ENCODE measurements at regions of chr3 and their contacts with region 1.

Region 1: DNA sequence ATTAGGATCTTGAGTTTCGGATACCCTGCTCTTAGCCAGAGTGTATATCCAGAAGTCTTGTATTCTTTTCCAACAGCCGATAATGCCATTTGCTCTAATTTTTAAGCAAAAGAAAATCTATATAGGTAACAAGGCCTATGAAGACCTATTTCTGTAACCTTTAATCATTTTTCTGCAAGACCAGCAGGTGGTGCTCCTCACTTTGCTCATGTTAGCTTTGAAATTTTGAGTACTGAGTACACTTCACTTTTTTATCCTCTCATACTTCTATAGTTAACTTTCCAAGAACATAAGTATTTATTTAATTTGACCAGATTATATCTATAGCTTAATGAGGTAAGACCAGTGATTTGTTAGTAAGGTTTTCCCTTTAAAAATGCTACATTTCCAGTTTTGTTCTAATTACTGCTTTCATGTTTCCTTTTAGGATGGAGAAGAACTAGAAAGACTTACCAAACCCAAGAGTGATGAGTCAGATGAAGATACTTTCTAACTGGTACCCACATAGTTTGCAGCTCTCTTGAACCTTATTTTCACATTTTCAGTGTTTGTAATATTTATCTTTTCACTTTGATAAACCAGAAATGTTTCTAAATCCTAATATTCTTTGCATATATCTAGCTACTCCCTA is 20.5 kb downstream of the SLC35A5 start:
- DNase-seq: no peak
- ATAC-seq: no peak
- H3K4me3 ChIP-seq: no peak overlapping the region
- H3K27ac ChIP-seq: no peak overlapping the region
- H3K4me1 ChIP-seq: no peaks in the 10 kb centered on the region
- H3K27me3 ChIP-seq: no peaks in the 10 kb centered on the region

Region 2: GRCh38 chr3:112390783-112391641 is 191.3 kb before region 1 on chr3:
- intact Hi-C with region 1: no loop called
- DNase-seq: no peak
- ATAC-seq: peak; percentile 78 to 82
- H3K4me3 ChIP-seq: no peak overlapping the region
- H3K27ac ChIP-seq: peak overlapping the region; percentile 54
- H3K4me1 ChIP-seq: peaks cover 7% of the 10 kb centered on the region
- H3K27me3 ChIP-seq: no peaks in the 10 kb centered on the region

Region 3: DNA sequence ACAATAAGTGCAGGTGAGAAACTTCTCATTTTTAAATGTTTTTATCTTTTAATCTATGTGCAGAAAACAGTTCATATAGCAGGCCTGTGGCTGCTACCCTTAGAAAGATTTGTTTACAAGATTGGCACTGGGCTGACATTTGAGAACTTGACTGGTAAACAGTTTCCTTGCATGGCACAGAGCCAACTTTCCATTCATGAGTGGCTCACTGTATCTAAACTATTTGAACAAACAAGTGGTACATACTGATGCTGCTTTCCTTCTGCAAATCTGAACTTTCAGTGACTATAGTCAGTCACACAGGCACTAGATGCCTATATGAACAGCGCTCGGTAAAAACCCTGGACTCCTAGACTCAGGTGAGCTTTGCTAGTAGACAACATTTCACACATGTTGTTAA is 402.1 kb after region 1 on chr3:
- intact Hi-C with region 1: loop called in 2 of 4 experiments (anchors 10 kb)
- DNase-seq: no peak
- ATAC-seq: no peak
- H3K4me3 ChIP-seq: no peak overlapping the region
- H3K27ac ChIP-seq: no peak overlapping the region
- H3K4me1 ChIP-seq: peaks cover 2% of the 10 kb centered on the region
- H3K27me3 ChIP-seq: no peaks in the 10 kb centered on the region